ENCODE measurements at regions of chr2 and their contacts with region 1.

Region 1: DNA sequence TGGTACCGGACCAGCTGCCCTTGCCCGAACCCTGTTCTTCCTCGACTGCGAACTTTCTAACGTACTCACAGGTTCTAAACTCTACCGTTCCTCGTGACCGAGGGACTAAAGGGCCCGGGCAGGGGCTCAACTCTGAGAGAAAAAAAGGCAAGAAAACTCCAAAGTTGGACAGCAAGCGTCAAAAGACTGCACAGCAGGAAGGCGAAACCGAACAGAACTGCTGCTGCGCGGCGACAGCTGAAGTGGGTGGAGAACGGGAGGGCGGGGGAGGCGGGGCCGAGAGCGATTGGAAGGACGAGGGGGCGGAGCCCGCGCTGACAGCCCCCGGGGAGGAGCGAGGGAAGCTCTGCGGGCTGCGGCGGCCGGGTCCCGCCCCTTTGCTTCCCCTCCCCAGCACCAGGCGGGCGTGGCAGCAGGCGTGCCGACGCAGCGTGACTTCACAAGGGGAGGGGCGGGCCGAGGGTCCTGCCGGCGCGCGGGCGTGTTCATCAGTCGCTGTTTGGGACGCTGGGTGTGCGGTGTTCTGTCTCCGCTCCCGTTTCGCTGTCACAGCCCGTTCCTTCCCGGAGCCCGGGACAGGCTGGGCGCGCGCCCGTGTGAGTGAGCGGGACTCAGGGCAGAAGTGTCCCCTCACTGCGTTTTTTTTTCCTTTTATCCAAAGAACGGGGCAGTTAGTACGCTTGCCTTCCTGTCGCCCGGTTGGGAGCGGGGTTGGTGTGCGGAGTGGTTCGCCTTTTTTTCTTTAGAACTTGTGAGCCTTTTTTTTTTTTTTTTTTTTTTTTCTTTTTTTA is at the start of gene NABP1:
- DNase-seq: peak; percentile 79 to 95
- H3K4me3 ChIP-seq: peak within 1 kb of the TSS; percentile 86
- H3K27ac ChIP-seq: peak within 1 kb of the TSS; percentile 98
- H3K4me1 ChIP-seq: peaks cover 32% of the 10 kb centered on the region
- H3K27me3 ChIP-seq: no peaks in the 10 kb centered on the region
- CTCF ChIP-seq: no peak
- total RNA-seq, gene NABP1: 39.0 and 46.5 TPM in 2 replicates

Region 2: DNA sequence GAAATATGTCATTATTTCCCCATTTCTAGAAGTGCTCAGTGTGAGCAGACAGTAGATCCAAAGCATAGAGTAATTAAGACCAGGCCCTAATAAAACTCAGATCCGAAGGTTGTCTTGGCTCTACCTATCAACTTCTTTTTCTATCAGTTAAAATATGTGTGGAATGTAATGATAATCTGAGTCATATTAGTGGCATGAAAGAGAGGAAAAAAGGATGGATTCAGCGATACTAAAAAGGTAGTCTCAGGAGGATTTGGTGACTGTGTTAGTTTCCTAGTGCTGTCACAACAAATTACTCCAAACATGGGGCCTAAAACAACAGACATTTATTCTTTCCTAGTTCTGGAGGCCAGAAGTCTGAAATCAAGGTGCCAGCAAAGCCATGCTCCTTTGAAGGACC is 103.6 kb before region 1 on chr2:
- CTCF ChIA-PET with region 1: no interaction called
- POLR2A ChIA-PET with region 1: no interaction called
- intact Hi-C with region 1: no loop called
- DNase-seq: peak in 1 of 2 experiments; percentile 58
- H3K4me3 ChIP-seq: no peak overlapping the region
- H3K27ac ChIP-seq: no peak overlapping the region
- H3K4me1 ChIP-seq: peaks cover 20% of the 10 kb centered on the region
- H3K27me3 ChIP-seq: no peaks in the 10 kb centered on the region
- CTCF ChIP-seq: no peak

Region 3: GRCh38 chr2:191593622-191594416 is 84.0 kb before region 1 on chr2:
- CTCF ChIA-PET with region 1: no interaction called
- POLR2A ChIA-PET with region 1: no interaction called
- intact Hi-C with region 1: loop called (anchors 1 kb)
- DNase-seq: peak; percentile 59 to 87
- H3K4me3 ChIP-seq: no peak overlapping the region
- H3K27ac ChIP-seq: peak overlapping the region; percentile 91
- H3K4me1 ChIP-seq: peaks cover 21% of the 10 kb centered on the region
- H3K27me3 ChIP-seq: no peaks in the 10 kb centered on the region
- CTCF ChIP-seq: no peak

Region 4: GRCh38 chr2:191620145-191620544 is 57.7 kb before region 1 on chr2:
- CTCF ChIA-PET with region 1: no interaction called
- POLR2A ChIA-PET with region 1: interaction called, 22 read pairs
- intact Hi-C with region 1: no loop called
- DNase-seq: peak; percentile 44 to 84
- H3K4me3 ChIP-seq: no peak overlapping the region
- H3K27ac ChIP-seq: peak overlapping the region; percentile 86
- H3K4me1 ChIP-seq: peaks cover 71% of the 10 kb centered on the region
- H3K27me3 ChIP-seq: no peaks in the 10 kb centered on the region
- CTCF ChIP-seq: no peak

Region 5: DNA sequence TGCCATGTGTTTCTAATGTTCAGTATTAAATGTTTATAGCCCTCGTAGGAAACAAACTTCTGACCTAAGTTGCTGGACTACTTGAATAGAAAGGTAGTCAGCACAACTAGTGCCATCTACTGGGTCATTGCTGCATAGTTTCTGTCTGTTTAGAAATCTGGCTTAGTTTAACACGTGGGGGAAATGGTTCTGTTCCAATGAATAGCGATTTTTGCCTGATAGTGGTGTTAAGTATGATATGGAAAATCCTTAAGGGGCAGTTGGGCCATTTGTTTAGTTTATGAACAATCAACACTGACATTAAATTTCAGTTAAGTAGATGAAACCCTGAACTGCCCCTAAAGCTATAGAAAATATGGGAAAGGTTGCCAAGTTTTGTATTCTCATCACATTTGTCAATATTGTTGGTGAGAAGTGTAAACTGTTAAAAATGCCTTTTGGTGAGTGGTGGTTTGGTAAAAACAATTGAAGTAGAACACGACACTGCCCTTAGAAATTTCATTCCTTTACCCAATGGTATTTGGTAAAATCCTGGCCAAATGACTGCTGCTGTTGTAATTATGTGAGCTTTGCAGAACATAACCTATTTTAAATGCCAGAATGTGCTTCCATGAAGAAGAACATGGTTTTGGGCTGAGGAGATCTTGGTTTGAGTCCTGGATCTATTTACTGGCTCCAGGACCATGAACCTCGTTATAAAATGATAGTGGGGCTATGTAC is 13.3 kb after region 1 on chr2:
- CTCF ChIA-PET with region 1: no interaction called
- POLR2A ChIA-PET with region 1: interaction called, 9 read pairs
- intact Hi-C with region 1: loop called (anchors 1 kb)
- DNase-seq: peak in 1 of 2 experiments; percentile 71
- H3K4me3 ChIP-seq: no peak overlapping the region
- H3K27ac ChIP-seq: peak overlapping the region; percentile 51
- H3K4me1 ChIP-seq: peaks cover 56% of the 10 kb centered on the region
- H3K27me3 ChIP-seq: no peaks in the 10 kb centered on the region
- CTCF ChIP-seq: peak; percentile 67

Region 6: GRCh38 chr2:191724015-191724414 is 46.2 kb after region 1 on chr2:
- CTCF ChIA-PET with region 1: no interaction called
- POLR2A ChIA-PET with region 1: no interaction called
- intact Hi-C with region 1: no loop called
- DNase-seq: no peak
- H3K4me3 ChIP-seq: no peak overlapping the region
- H3K27ac ChIP-seq: no peak overlapping the region
- H3K4me1 ChIP-seq: no peaks in the 10 kb centered on the region
- H3K27me3 ChIP-seq: no peaks in the 10 kb centered on the region
- CTCF ChIP-seq: no peak